ENCODE measurements at regions of chr12 and their contacts with region 1.

Region 1: GRCh38 chr12:128387811-128388422 is 120.9 kb downstream of the TMEM132C start:
- DNase-seq: peak; percentile 60 to 91
- H3K4me3 ChIP-seq: no peak overlapping the region
- H3K27ac ChIP-seq: no peak overlapping the region
- H3K4me1 ChIP-seq: peaks cover 1 to 4% (median 3%) of the 10 kb centered on the region in 4 experiments; a peak in 4 of 7 replicates
- H3K27me3 ChIP-seq: peaks cover 0 to 9% (median 2%) of the 10 kb centered on the region in 4 experiments; a peak in 5 of 7 replicates
- CTCF ChIP-seq: peak; percentile 83 to 95 (median 94)
- EP300 ChIP-seq: no peak
- POLR2A ChIP-seq: no peak
- RAD21 ChIP-seq: peak; percentile 88 to 93

Region 2: GRCh38 chr12:128266541-128267296 is 121.2 kb before region 1 on chr12 and contains the start of gene TMEM132C:
- CTCF ChIA-PET with region 1: interaction called, 86 read pairs
- POLR2A ChIA-PET with region 1: no interaction called
- DNase-seq: peak in 1 of 2 experiments; percentile 63
- H3K4me3 ChIP-seq: peak within 1 kb of the TSS; percentile 33 to 63 (median 55)
- H3K27ac ChIP-seq: no peak within 1 kb of the TSS
- H3K4me1 ChIP-seq: peaks cover 3 to 17% (median 12%) of the 10 kb centered on the region in 4 experiments
- H3K27me3 ChIP-seq: peaks cover 30 to 63% (median 59%) of the 10 kb centered on the region in 4 experiments
- CTCF ChIP-seq: no peak
- EP300 ChIP-seq: no peak
- POLR2A ChIP-seq: no peak
- RAD21 ChIP-seq: no peak
- total RNA-seq, gene TMEM132C: 0.59 and 0.76 TPM in 2 replicates

Region 3: DNA sequence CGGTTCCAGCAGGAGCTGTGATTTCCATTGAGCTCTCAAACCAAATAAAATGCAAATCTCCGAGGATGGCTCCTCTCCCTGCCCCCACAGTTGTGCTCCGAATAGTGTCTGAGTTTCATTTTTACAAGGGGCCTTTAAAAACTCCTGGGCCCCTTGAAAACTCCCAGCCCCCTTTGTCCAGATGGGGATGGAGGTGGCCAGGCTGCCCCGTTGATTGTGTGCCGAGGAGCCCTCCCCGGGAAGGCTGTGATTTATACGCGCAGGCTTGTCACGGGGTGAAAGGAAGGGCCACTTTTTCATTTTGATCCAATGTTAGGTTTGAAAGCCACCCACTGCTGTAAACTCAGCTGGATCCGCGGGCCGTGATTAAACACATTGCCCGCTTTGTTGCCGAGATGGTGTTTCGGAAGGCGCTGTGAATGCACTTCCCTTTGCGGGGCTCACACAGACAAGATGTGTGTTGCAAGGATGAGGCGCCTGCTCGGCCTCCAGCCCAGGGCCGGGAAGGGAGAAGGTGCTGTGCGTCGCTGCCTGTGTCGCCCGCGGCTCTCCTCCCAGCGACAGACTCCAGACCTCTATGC is 22.2 kb before region 1 on chr12:
- CTCF ChIA-PET with region 1: interaction called, 12 read pairs
- POLR2A ChIA-PET with region 1: interaction called, 3 read pairs
- DNase-seq: peak in 1 of 2 experiments; percentile 54
- H3K4me3 ChIP-seq: peak overlapping the region; percentile 33 to 57 (median 46); a peak in 7 of 8 replicates
- H3K27ac ChIP-seq: no peak overlapping the region
- H3K4me1 ChIP-seq: peaks cover 2 to 8% (median 4%) of the 10 kb centered on the region in 4 experiments; a peak in 6 of 7 replicates
- H3K27me3 ChIP-seq: peaks cover 0 to 26% (median 19%) of the 10 kb centered on the region in 4 experiments; a peak in 6 of 7 replicates
- CTCF ChIP-seq: no peak
- EP300 ChIP-seq: no peak
- POLR2A ChIP-seq: no peak
- RAD21 ChIP-seq: no peak

Region 4: DNA sequence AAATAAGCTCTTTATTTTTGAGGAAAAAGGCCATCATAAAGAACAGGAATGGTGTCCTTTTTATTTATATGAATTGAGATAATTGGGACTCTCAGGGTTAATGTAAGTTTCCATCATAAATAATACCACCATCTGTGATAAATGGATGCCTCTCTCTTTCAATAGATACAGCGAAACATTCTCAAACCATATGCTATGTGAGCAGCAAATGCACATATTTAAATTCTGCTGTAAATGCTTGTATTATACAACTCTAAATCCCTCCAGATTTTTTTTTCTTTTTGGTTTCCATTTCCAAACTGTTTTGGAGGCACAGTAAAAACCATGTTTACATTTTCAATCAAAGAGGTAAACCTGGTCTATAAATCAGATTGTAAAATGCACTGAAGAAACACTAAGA is 11.3 kb after region 1 on chr12:
- CTCF ChIA-PET with region 1: interaction called, 26 read pairs
- POLR2A ChIA-PET with region 1: no interaction called
- DNase-seq: no peak
- H3K4me3 ChIP-seq: no peak overlapping the region
- H3K27ac ChIP-seq: no peak overlapping the region
- H3K4me1 ChIP-seq: peaks cover 0 to 5% (median 4%) of the 10 kb centered on the region in 4 experiments; a peak in 3 of 7 replicates
- H3K27me3 ChIP-seq: no peaks in the 10 kb centered on the region; a peak in 1 of 7 replicates
- CTCF ChIP-seq: no peak
- EP300 ChIP-seq: no peak
- POLR2A ChIP-seq: no peak
- RAD21 ChIP-seq: no peak

Measured in H1 (cell line).